IMR-90 (cell line): ENCODE measurements at regions of chr14 and their contacts with region 1.

Region 1: DNA sequence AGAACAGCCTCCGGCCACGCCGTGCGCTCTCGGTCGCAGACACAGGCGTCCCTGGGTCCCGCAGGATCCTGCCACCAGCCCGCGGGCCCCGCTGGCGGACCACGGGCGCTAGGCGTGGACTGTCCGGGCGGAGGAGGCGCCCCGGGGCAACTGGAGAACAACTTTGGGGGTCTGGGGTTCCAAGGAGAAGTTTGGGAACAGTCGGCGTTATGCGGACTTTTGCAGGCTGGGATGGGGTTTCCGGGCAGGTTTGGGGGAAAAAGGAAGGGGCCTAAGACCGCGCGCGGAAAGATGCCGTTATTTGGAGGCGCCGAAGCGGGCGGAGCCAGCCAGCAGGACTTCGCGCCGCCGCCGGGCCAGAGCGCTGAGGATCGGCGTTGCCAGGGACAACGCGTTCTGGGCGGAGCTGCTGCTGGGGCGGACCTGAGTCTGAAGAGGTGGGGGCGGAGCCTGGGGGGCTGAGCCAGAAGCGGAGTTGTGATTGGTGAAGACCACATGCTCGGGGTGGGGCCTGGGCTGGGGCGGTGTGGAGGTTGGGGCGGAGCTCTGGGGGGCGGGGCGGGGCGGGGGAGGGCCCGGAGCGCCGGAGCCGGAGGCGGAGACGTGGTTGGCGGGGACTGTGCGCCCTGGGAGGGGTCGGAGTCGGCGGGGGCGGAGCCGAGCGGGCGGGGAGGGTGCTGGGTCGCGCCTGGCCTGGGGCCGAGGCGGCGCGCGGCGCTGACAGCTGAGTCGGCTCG is at the start of gene CYP46A1:
- DNase-seq: peak; percentile 99
- ATAC-seq: peak; percentile 97
- H3K4me3 ChIP-seq: peak within 1 kb of the TSS; percentile 88
- H3K27ac ChIP-seq: peak within 1 kb of the TSS; percentile 65
- H3K4me1 ChIP-seq: peaks cover 8% of the 10 kb centered on the region
- H3K27me3 ChIP-seq: peaks cover 29% of the 10 kb centered on the region
- CTCF ChIP-seq: no peak
- POLR2A ChIP-seq: no peak
- RAD21 ChIP-seq: no peak
- total RNA-seq, gene CYP46A1: under 0.01 and 0.18 TPM in 2 replicates

Region 2: GRCh38 chr14:99744199-99744879 is 60.6 kb after region 1 on chr14:
- CTCF ChIA-PET with region 1: no interaction called
- POLR2A ChIA-PET with region 1: no interaction called
- dilution Hi-C with region 1: no loop called
- in situ Hi-C with region 1: no loop called
- intact Hi-C with region 1: loop called (anchors 2 kb)
- DNase-seq: peak; percentile 67
- ATAC-seq: peak; percentile 21
- H3K4me3 ChIP-seq: no peak overlapping the region
- H3K27ac ChIP-seq: peak overlapping the region; percentile 86
- H3K4me1 ChIP-seq: peaks cover 18% of the 10 kb centered on the region
- H3K27me3 ChIP-seq: no peaks in the 10 kb centered on the region
- CTCF ChIP-seq: 0 out of 2 replicates have a peak, but pooled peaks have one; percentile 22
- POLR2A ChIP-seq: no peak; the same call in 1 of the 2 replicates
- RAD21 ChIP-seq: peak; percentile 9; the same call in 1 of the 2 replicates

Region 3: GRCh38 chr14:99768381-99768780 is 84.6 kb after region 1 on chr14:
- CTCF ChIA-PET with region 1: no interaction called
- POLR2A ChIA-PET with region 1: no interaction called
- dilution Hi-C with region 1: no loop called
- in situ Hi-C with region 1: no loop called
- intact Hi-C with region 1: no loop called
- DNase-seq: no peak
- ATAC-seq: peak; percentile 33; the same call in 1 of the 2 replicates
- H3K4me3 ChIP-seq: no peak overlapping the region
- H3K27ac ChIP-seq: no peak overlapping the region
- H3K4me1 ChIP-seq: peaks cover 5% of the 10 kb centered on the region; the same call in 1 of the 2 replicates
- H3K27me3 ChIP-seq: no peaks in the 10 kb centered on the region
- CTCF ChIP-seq: no peak
- POLR2A ChIP-seq: no peak
- RAD21 ChIP-seq: no peak

Region 4: DNA sequence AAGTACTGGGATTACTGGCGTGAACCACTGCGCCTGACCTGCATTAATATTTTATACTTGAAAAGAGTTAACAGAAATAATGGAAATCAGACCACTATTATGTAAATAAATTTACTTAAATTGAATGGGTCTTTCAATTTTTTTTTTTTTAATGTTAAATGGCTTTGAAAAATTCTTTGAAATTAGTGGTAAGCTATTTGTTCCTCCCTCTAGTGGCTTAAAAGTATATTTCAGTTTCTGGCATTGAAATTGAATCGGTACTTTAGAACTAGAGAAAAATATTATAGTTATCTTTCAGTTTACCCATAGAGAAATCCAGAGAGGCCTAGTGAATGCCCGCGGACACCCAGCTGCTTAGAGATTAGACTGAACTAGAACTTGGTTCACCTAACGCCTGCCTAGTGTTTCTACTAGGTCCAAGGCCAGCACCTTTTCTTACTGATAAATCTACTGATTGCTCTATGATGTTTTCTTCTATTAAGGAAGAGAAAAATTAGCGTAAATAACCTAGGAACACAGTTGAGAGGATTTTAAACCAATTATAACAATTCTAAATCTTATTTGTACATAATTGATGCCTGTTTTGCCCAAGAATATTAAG is 215.9 kb after region 1 on chr14:
- CTCF ChIA-PET with region 1: no interaction called
- POLR2A ChIA-PET with region 1: no interaction called
- dilution Hi-C with region 1: no loop called
- in situ Hi-C with region 1: no loop called
- intact Hi-C with region 1: loop called (anchors 1 kb)
- DNase-seq: peak; percentile 47
- ATAC-seq: peak; percentile 62
- H3K4me3 ChIP-seq: no peak overlapping the region
- H3K27ac ChIP-seq: no peak overlapping the region
- H3K4me1 ChIP-seq: no peaks in the 10 kb centered on the region
- H3K27me3 ChIP-seq: no peaks in the 10 kb centered on the region
- CTCF ChIP-seq: peak; percentile 56
- POLR2A ChIP-seq: no peak
- RAD21 ChIP-seq: peak; percentile 39

Region 5: GRCh38 chr14:99946652-99947489 is 263.1 kb after region 1 on chr14:
- CTCF ChIA-PET with region 1: no interaction called
- POLR2A ChIA-PET with region 1: no interaction called
- dilution Hi-C with region 1: no loop called
- in situ Hi-C with region 1: no loop called
- intact Hi-C with region 1: loop called (anchors 2 kb)
- DNase-seq: no peak
- ATAC-seq: peak; percentile 82
- H3K4me3 ChIP-seq: no peak overlapping the region
- H3K27ac ChIP-seq: no peak overlapping the region
- H3K4me1 ChIP-seq: no peaks in the 10 kb centered on the region
- H3K27me3 ChIP-seq: peaks cover 4% of the 10 kb centered on the region; the same call in 1 of the 2 replicates
- CTCF ChIP-seq: peak; percentile 69
- POLR2A ChIP-seq: no peak
- RAD21 ChIP-seq: peak; percentile 48

Region 6: GRCh38 chr14:100203949-100204834 is 520.4 kb after region 1 on chr14:
- CTCF ChIA-PET with region 1: no interaction called
- POLR2A ChIA-PET with region 1: no interaction called
- dilution Hi-C with region 1: no loop called
- in situ Hi-C with region 1: no loop called
- intact Hi-C with region 1: no loop called
- DNase-seq: peak; percentile 50
- ATAC-seq: peak; percentile 68
- H3K4me3 ChIP-seq: no peak overlapping the region
- H3K27ac ChIP-seq: no peak overlapping the region
- H3K4me1 ChIP-seq: peaks cover 4% of the 10 kb centered on the region
- H3K27me3 ChIP-seq: no peaks in the 10 kb centered on the region
- CTCF ChIP-seq: no peak
- POLR2A ChIP-seq: no peak
- RAD21 ChIP-seq: no peak